Left ventricle myocardium superior (tissue), 1 donor: ENCODE measurements at regions of chr7 and their contacts with region 1.

Region 1: DNA sequence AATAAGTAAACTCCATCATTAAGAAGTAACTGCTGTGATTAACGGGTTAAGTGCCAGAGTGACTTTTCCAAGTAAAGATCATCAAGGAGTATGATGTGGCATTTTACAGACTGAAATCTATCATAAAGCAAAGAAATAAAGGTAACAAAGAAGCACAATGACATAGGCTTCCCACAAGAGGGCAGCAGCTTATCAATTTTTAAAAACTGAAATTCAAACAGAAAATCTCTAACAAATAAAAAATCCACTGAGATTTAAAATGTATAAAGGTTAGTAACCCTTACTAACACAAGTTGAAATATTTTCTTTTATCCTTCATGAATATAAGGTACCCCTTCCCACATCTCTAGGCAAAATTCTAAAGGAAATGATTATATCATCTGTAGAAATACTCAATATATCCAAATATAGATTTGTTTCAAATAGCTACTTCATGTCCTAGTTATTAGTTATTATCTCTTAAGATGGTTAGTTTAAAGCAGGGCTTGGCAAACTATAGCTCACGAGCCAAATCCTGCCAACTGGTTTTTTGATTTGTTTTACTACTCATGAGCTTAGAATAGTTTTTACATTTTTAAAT is 29.2 kb downstream of the FAM3C start:
- DNase-seq: no peak
- ATAC-seq: no peak

Region 2: GRCh38 chr7:121547544-121548092 is 180.7 kb after region 1 on chr7:
- intact Hi-C with region 1: loop called (anchors 2 kb)
- DNase-seq: no peak
- ATAC-seq: peak; percentile 71